SK-N-SH (cell line): ENCODE measurements at regions of chr22 and their contacts with region 1.

Region 1: GRCh38 chr22:22422629-22423112 is 85.9 kb downstream of the ZNF280B start:
- DNase-seq: peak; percentile 49
- H3K4me3 ChIP-seq: peak overlapping the region in 1 of 2 experiments; percentile 6; a peak in 1 of 4 replicates
- H3K27ac ChIP-seq: no peak overlapping the region
- H3K4me1 ChIP-seq: no peaks in the 10 kb centered on the region
- H3K27me3 ChIP-seq: peaks cover 7% of the 10 kb centered on the region; the same call in 1 of the 2 replicates
- CTCF ChIP-seq: peak; percentile 88
- EP300 ChIP-seq: no peak
- RAD21 ChIP-seq: peak; percentile 26; the same call in 1 of the 2 replicates

Region 2: DNA sequence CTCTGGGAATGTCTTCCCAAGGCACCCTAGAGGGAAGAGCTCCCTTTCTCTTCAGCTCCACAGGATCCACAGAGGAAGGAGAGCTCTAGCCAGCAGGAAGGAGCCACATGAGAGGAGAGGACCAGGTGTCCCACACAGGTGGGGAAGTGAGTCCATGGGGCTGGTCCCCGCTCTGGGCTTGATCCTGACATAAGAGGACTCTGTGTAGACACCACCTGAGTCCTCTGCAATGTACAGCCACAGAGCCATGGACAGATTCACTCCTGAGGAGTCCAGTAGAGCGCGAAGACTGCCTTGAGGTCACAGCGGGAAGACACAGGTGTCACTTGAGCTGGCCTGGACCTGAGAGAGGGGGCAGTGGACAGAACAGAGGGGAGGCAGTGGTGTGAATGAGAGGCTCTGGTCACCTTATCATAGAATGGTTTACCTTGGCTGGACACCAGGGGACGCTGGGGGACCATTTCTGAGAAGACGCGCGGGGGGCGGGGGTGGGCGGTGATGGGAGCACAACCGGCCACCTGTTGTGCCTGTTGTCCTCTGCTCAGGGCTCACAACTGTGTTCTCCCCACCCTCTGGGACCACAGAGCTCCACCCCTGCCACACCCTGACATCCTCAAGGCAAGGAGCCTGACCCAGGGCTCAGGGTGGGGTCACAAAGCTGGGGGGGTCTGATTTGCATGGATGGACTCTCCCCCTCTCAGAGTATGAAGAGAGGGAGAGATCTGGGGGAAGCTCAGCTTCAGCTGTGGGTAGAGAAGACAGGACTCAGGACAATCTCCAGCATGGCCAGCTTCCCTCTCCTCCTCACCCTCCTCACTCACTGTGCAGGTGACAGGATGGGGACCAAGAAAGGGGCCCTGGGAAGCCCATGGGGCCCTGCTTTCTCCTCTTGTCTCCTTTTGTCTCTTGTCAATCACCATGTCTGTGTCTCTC is 42.3 kb before region 1 on chr22:
- CTCF ChIA-PET with region 1: no interaction called
- POLR2A ChIA-PET with region 1: no interaction called
- DNase-seq: peak; percentile 35
- H3K4me3 ChIP-seq: no peak overlapping the region
- H3K27ac ChIP-seq: no peak overlapping the region
- H3K4me1 ChIP-seq: no peaks in the 10 kb centered on the region
- H3K27me3 ChIP-seq: peaks cover 4% of the 10 kb centered on the region
- CTCF ChIP-seq: peak; percentile 18; the same call in 1 of the 2 replicates
- EP300 ChIP-seq: no peak
- RAD21 ChIP-seq: no peak

Region 3: DNA sequence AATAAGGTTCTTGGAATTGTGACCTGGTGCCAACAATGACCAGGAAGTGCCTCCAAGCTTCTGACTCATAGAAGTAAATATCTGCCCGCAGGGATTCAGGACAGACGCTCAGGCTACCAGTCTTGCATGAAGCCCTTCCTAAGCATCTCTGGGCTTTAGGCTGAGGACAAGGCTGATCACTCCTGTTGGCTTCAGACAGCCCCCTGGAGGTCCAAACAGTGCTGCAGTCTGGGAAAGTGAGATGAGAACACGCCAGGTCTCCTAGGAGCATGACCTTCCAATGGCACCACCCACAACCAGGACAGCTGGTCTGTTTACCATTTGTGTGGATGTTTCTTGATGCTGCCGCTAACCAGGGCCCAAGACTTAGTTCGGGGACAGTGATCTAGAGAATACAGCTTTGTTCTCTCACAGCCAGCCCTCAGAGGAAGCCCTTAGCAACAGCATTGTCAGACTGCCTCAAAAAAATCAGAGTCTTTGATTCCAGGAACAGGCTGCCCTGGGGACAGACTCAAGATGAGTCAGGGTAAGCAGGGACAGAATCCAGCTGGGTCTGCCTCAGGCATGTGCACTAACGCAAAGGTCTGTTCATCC is 25.3 kb before region 1 on chr22:
- CTCF ChIA-PET with region 1: interaction called, 21 read pairs
- POLR2A ChIA-PET with region 1: no interaction called
- DNase-seq: no peak
- H3K4me3 ChIP-seq: no peak overlapping the region
- H3K27ac ChIP-seq: no peak overlapping the region
- H3K4me1 ChIP-seq: peaks cover 0 to 4% of the 10 kb centered on the region in 2 experiments; a peak in 1 of 4 replicates
- H3K27me3 ChIP-seq: no peaks in the 10 kb centered on the region; the same call in 1 of the 2 replicates
- CTCF ChIP-seq: no peak; the same call in 1 of the 2 replicates
- EP300 ChIP-seq: no peak
- RAD21 ChIP-seq: no peak

Region 4: GRCh38 chr22:22403771-22404170 is 18.9 kb before region 1 on chr22:
- CTCF ChIA-PET with region 1: interaction called, 34 read pairs
- POLR2A ChIA-PET with region 1: no interaction called
- DNase-seq: no peak
- H3K4me3 ChIP-seq: no peak overlapping the region
- H3K27ac ChIP-seq: no peak overlapping the region
- H3K4me1 ChIP-seq: no peaks in the 10 kb centered on the region
- H3K27me3 ChIP-seq: peaks cover 9% of the 10 kb centered on the region; the same call in 1 of the 2 replicates
- CTCF ChIP-seq: no peak
- EP300 ChIP-seq: no peak
- RAD21 ChIP-seq: no peak

Region 5: DNA sequence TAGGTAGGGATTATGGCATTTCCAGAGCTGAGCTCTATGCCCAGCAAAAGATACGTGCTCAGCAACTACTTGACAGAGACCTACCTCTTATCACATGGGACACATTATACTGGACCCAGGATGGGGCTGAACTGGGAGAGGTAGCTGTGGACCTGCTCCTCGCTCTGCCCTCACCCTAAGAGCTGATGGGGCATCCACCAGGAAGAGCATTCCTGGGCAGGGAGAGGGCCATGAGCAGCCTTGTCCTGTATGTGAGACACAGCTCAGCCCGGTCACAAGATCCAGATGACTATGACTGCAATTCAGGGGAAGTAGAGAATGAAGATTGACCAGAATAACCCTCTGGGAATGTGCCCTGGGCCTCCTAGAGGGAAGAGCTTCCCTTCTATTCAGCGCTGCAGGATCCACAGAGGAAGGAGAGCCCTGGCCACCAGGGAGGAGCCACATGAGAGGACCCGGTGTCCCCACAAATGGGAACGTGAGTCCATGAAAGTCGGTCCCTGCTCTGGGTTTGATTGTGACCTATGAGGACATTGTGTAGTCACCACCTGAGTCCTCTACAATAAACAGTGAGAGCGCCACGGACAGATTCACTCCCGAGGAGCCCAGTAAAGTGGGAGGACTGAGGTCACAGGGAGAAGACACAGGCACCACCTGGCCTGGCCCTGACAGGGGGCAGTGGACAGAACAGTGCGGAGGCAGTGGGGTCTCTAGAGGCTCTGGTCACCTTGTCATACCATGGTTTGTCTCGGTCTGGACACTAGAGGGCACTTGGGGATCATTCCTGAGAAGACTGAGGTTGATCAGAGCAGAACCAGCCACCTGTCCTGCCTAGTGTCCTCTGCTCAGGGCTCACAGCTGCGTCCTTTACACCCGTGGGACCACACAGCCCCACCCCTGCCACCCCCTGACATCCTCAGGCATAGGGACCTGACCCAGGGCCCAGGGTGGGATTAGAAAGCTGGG is 13.7 kb before region 1 on chr22:
- CTCF ChIA-PET with region 1: interaction called, 34 read pairs
- POLR2A ChIA-PET with region 1: no interaction called
- DNase-seq: peak; percentile 44
- H3K4me3 ChIP-seq: no peak overlapping the region
- H3K27ac ChIP-seq: no peak overlapping the region
- H3K4me1 ChIP-seq: no peaks in the 10 kb centered on the region
- H3K27me3 ChIP-seq: peaks cover 13% of the 10 kb centered on the region; the same call in 1 of the 2 replicates
- CTCF ChIP-seq: peak; percentile 46
- EP300 ChIP-seq: no peak
- RAD21 ChIP-seq: peak; percentile 33

Region 6: DNA sequence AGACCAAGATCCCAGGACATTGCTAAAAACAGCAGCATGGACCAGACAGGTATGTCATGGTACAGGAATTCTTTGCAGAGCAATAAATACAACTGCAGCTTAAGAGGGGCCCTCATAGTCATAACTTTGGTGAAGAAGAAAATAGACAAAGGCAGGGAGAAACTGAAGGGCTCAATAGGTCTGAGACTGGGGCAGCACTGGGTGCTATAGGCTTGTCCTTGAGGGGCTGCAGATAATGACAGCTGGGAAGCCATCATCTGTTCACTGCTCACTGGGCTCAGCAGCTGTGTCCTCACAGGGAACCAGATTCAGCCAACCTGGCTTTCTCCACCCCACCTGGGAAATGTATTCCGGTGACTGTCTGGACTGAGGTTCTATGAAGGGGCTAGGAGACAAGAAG is 17.5 kb after region 1 on chr22:
- CTCF ChIA-PET with region 1: interaction called, 12 read pairs
- POLR2A ChIA-PET with region 1: no interaction called
- DNase-seq: no peak
- H3K4me3 ChIP-seq: no peak overlapping the region
- H3K27ac ChIP-seq: no peak overlapping the region
- H3K4me1 ChIP-seq: no peaks in the 10 kb centered on the region
- H3K27me3 ChIP-seq: no peaks in the 10 kb centered on the region; the same call in 1 of the 2 replicates
- CTCF ChIP-seq: no peak
- EP300 ChIP-seq: no peak
- RAD21 ChIP-seq: no peak